ENCODE measurements at regions of chr17 and their contacts with region 1.

Region 1: DNA sequence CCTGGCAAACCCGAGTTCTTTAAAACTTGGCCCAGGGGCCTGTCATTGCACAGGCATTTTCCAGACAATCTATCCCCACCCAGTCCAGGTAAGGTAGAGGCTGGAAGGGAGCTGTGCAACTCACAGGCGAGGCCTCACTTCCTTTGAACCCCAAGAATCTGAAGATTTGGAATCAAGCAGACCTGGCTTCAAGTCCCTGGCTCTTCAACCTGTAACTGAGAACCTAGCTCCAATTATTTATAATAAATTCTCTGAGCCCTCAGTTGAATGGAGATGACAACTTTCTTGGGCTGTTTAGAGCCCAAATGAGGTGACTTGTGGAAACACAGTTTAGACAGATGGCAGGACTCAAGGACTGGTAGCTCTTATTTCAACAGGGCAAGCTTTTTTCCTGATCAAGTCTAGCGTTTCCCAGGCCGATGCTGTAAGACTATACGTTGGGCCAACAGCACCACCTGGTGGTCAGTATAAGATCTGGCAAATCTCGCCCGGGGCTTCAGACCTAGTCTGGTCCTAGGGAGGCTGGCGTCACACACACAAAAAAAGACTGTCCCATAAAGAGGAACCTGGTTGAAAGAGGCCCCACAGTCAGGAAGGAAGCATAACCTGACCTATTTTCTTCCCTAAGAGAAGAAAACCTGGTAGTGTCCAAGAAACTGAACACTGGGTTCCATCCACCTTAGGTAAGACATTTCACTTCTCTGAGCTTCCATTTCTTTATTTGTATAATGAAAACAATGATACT is 117.9 kb downstream of the C17orf67 start:
- DNase-seq: peak; percentile 91 to 94 (median 93)
- H3K4me3 ChIP-seq: peak overlapping the region in 1 of 7 experiments; percentile 42
- H3K27ac ChIP-seq: peak overlapping the region; percentile 2 to 57
- H3K4me1 ChIP-seq: peaks cover 2 to 38% (median 21%) of the 10 kb centered on the region in 4 experiments
- H3K27me3 ChIP-seq: no peaks in the 10 kb centered on the region

Region 2: GRCh38 chr17:56499799-56500388 is 215.9 kb before region 1 on chr17:
- CTCF ChIA-PET with region 1: interaction called, 12 read pairs
- POLR2A ChIA-PET with region 1: interaction called, 4 read pairs
- DNase-seq: peak; percentile 46 to 69 (median 58)
- H3K4me3 ChIP-seq: no peak overlapping the region
- H3K27ac ChIP-seq: no peak overlapping the region
- H3K4me1 ChIP-seq: peaks cover 0 to 15% (median 1%) of the 10 kb centered on the region in 4 experiments
- H3K27me3 ChIP-seq: no peaks in the 10 kb centered on the region

Region 3: GRCh38 chr17:56592487-56593085 is 123.2 kb before region 1 on chr17:
- CTCF ChIA-PET with region 1: interaction called, 27 read pairs
- POLR2A ChIA-PET with region 1: no interaction called
- DNase-seq: peak; percentile 58 to 85 (median 77)
- H3K4me3 ChIP-seq: peak overlapping the region; percentile 63 to 83 (median 78)
- H3K27ac ChIP-seq: no peak overlapping the region
- H3K4me1 ChIP-seq: peaks cover 6 to 41% (median 28%) of the 10 kb centered on the region in 4 experiments
- H3K27me3 ChIP-seq: no peaks in the 10 kb centered on the region

Region 4: GRCh38 chr17:56608951-56609350 is 106.8 kb before region 1 on chr17:
- CTCF ChIA-PET with region 1: no interaction called
- POLR2A ChIA-PET with region 1: no interaction called
- DNase-seq: no peak
- H3K4me3 ChIP-seq: no peak overlapping the region
- H3K27ac ChIP-seq: no peak overlapping the region
- H3K4me1 ChIP-seq: peaks cover 0 to 8% (median 1%) of the 10 kb centered on the region in 4 experiments
- H3K27me3 ChIP-seq: no peaks in the 10 kb centered on the region

Region 5: GRCh38 chr17:56653877-56654276 is 61.9 kb before region 1 on chr17:
- CTCF ChIA-PET with region 1: interaction called, 19 read pairs
- POLR2A ChIA-PET with region 1: no interaction called
- DNase-seq: peak; percentile 81 to 90 (median 84)
- H3K4me3 ChIP-seq: no peak overlapping the region
- H3K27ac ChIP-seq: no peak overlapping the region
- H3K4me1 ChIP-seq: peaks cover 9 to 25% (median 12%) of the 10 kb centered on the region in 4 experiments
- H3K27me3 ChIP-seq: no peaks in the 10 kb centered on the region

Region 6: GRCh38 chr17:56679115-56679766 is 36.5 kb before region 1 on chr17:
- CTCF ChIA-PET with region 1: interaction called, 16 read pairs
- POLR2A ChIA-PET with region 1: interaction called, 4 read pairs
- DNase-seq: peak; percentile 53 to 69 (median 63)
- H3K4me3 ChIP-seq: peak overlapping the region in 6 of 7 experiments; percentile 35 to 72 (median 50)
- H3K27ac ChIP-seq: no peak overlapping the region
- H3K4me1 ChIP-seq: peaks cover 36 to 72% (median 60%) of the 10 kb centered on the region in 4 experiments
- H3K27me3 ChIP-seq: peaks cover 0 to 11% (median 5%) of the 10 kb centered on the region in 5 experiments

Region 7: DNA sequence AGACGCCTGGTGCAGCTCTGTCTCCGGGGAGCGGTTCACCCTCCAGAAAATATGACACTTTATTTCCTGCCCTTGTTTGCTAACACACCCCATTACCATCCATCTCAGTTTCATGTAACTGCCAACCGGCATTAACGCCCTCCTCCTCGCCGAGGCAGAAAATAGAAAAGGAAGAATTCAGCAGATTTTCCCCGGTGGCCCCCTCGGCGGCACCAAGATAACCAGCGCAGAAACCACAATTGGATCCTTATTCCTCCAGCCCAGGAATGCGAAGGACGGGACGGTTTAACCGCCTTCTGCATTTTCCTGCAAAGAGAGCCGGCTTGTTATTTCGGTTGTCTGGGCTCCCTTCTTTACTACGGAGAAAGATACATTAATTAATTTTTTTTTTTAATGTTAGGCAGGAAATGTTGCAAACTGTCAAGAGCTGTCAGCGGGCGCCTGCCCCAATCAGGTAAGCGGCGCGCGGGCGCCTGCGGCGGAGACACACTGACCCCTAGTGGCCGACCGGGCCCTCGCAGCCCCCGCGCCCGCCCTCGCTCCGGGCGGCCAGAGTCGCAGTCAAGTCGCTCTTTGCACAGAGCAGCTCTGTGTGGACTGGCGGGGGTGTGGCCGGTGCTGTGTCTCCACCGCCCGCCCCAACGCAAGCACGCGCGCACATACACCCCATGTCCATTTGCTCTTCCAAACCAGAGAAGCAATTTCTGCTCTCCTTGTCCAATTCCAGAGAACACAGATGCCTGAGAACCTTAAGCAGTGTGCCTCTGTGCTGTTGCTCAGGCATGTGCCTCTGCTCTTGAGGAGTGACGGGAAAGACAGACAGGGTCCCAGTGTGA is 64.3 kb after region 1 on chr17:
- CTCF ChIA-PET with region 1: interaction called, 18 read pairs
- POLR2A ChIA-PET with region 1: interaction called, 7 read pairs
- DNase-seq: peak; percentile 91 to 97 (median 95)
- H3K4me3 ChIP-seq: peak overlapping the region in 6 of 7 experiments; percentile 40 to 74 (median 66)
- H3K27ac ChIP-seq: peak overlapping the region; percentile 65 to 93
- H3K4me1 ChIP-seq: peaks cover 14 to 70% (median 63%) of the 10 kb centered on the region in 4 experiments
- H3K27me3 ChIP-seq: no peaks in the 10 kb centered on the region

Region 8: DNA sequence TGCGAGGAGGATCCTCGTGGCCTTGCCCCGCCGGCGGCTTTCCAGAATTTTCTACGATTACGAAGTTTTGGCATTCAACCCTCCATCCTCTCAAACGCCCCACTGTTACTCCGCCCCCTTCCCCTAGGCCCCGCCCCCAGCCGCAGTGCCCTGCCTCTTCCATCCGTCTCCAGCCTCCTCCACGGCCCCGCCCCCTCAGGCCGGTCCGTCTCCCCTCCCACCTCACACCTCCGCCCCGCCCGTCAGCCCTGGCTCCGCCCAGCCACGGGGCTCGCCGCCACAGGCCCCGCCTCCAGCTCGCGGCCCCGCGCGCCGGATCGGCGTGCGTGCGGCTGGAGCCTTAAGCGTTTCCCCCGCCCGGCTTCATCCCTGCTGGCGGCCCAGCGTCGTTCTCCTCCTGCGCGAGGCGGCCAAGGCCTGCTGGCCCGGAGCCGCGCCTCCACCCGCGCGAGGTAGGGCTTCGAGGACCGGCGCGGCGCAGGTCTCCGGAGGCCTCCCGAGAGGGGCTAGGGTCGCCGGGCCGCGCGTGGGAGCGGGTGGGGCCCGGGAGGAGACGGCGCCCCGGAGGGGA is 118.1 kb after region 1 on chr17 and contains the starts of genes C17orf67 and DGKE:
- CTCF ChIA-PET with region 1: no interaction called
- POLR2A ChIA-PET with region 1: no interaction called
- DNase-seq: peak; percentile 92 to 97 (median 96)
- H3K4me3 ChIP-seq: peak within 1 kb of the TSS; percentile 69 to 91 (median 85)
- H3K27ac ChIP-seq: peak within 1 kb of the TSS; percentile 40 to 77
- H3K4me1 ChIP-seq: peaks cover 18 to 49% (median 31%) of the 10 kb centered on the region in 4 experiments
- H3K27me3 ChIP-seq: no peaks in the 10 kb centered on the region

Region 9: GRCh38 chr17:56948491-56948890 is 232.7 kb after region 1 on chr17:
- CTCF ChIA-PET with region 1: no interaction called
- POLR2A ChIA-PET with region 1: no interaction called
- DNase-seq: no peak
- H3K4me3 ChIP-seq: no peak overlapping the region
- H3K27ac ChIP-seq: no peak overlapping the region
- H3K4me1 ChIP-seq: no peaks in the 10 kb centered on the region
- H3K27me3 ChIP-seq: no peaks in the 10 kb centered on the region

Measured in common myeloid progenitor, CD34-positive (primary cell).